ENCODE measurements at regions of chr9 and their contacts with region 1.

Region 1: GRCh38 chr9:130196643-130197042 is 24.4 kb downstream of the NCS1 start:
- DNase-seq: no peak
- H3K4me3 ChIP-seq: no peak overlapping the region
- H3K27ac ChIP-seq: no peak overlapping the region
- H3K4me1 ChIP-seq: peaks cover 0 to 9% (median 0%) of the 10 kb centered on the region in 4 experiments
- H3K27me3 ChIP-seq: peaks cover 0 to 6% (median 0%) of the 10 kb centered on the region in 5 experiments

Region 2: GRCh38 chr9:130088051-130088450 is 108.6 kb before region 1 on chr9:
- CTCF ChIA-PET with region 1: no interaction called
- POLR2A ChIA-PET with region 1: interaction called, 15 read pairs
- DNase-seq: no peak
- H3K4me3 ChIP-seq: no peak overlapping the region
- H3K27ac ChIP-seq: peak overlapping the region in 1 of 2 experiments; percentile 9
- H3K4me1 ChIP-seq: peaks cover 0 to 1% (median 0%) of the 10 kb centered on the region in 4 experiments
- H3K27me3 ChIP-seq: no peaks in the 10 kb centered on the region

Region 3: GRCh38 chr9:130220352-130220751 is 23.7 kb after region 1 on chr9:
- CTCF ChIA-PET with region 1: no interaction called
- POLR2A ChIA-PET with region 1: no interaction called
- DNase-seq: no peak
- H3K4me3 ChIP-seq: no peak overlapping the region
- H3K27ac ChIP-seq: no peak overlapping the region
- H3K4me1 ChIP-seq: peaks cover 0 to 9% (median 2%) of the 10 kb centered on the region in 4 experiments
- H3K27me3 ChIP-seq: no peaks in the 10 kb centered on the region

Region 4: DNA sequence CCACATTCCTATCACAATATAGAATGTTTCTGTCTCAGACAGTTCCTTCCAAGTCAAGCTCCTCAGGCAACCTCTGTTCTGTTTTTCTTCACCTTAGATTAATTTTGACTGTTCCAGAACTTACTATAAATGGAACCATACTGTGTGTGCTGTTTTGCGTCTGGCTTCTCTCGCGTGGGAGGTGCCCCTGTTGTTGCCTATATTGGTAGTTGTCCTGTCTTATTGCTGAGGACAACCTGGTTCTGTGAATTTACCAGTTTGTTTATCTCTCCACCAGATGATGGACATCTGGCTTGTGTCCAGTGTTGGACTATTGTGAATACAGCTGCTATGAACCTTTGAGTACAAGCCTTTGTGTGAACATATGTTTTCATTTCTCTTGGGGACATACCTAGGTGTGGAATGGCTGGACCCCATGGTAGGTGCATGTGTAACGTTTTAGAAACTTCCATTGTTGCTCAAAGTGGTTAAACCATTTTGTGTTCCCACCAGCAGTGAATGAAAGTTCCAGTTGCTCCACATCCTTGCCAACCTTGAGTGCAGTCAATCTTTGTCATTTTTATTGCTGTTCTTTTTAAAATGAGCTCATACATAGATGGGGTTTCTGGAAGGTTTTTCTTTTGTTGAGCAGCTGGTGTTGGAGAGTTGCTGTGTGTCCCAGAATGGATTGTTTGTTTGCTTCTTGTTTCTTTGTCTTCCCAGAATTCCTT is 87.1 kb after region 1 on chr9:
- CTCF ChIA-PET with region 1: no interaction called
- POLR2A ChIA-PET with region 1: no interaction called
- DNase-seq: no peak
- H3K4me3 ChIP-seq: no peak overlapping the region
- H3K27ac ChIP-seq: no peak overlapping the region
- H3K4me1 ChIP-seq: no peaks in the 10 kb centered on the region
- H3K27me3 ChIP-seq: peaks cover 0 to 46% (median 3%) of the 10 kb centered on the region in 5 experiments

Measured in common myeloid progenitor, CD34-positive (primary cell).